ENCODE measurements at regions of chr2 and their contacts with region 1.

Region 1: GRCh38 chr2:43226558-43226954 is at the start of gene ZFP36L2:
- DNase-seq: peak; percentile 94 to 95
- ATAC-seq: peak; percentile 59 to 61
- H3K4me3 ChIP-seq: peak within 1 kb of the TSS; percentile 76 to 99 (median 96)
- H3K27ac ChIP-seq: peak within 1 kb of the TSS; percentile 99 to 100 (median 100)
- H3K4me1 ChIP-seq: peaks cover 34 to 41% of the 10 kb centered on the region in 2 donors
- H3K27me3 ChIP-seq: no peaks in the 10 kb centered on the region
- CTCF ChIP-seq: no peak
- POLR2A ChIP-seq: peak; percentile 97 to 100
- total RNA-seq, gene ZFP36L2: 15.5 to 58.6 (median 44.8) TPM

Region 2: DNA sequence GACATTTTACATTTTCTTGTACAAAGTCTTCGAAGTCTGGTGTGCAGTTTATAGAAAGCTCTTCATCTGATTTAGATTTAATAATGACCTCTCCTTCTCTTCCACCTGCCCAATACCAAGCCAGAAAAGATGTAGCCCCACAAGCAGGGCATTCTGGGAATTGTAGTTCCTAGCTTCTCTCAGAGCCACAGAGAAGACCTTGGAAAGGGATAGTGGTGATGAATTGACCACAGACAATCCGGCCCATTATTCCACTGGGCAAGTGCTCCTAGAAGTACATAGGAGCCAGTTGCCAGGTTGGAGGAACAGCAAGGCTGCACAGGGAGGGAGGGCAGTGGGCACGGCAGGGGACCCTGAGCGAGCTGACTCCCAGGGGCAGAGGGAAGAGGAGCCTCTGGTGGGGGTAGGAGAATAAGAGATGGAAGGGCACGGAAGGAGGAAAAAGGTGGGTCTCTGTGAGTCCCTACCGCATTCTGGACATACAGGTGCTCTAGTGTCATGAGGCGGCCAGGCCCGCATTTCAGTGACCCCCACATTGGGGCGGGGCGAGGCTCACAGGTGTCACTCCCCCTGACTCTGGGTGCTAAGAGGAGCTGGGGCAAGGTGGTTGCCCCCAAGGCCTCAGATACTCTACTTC is 281.7 kb before region 1 on chr2:
- in situ Hi-C with region 1: loop called in 2 of 4 experiments (anchors 10 kb)
- intact Hi-C with region 1: loop called (anchors 1 kb)
- DNase-seq: no peak
- ATAC-seq: no peak
- H3K4me3 ChIP-seq: no peak overlapping the region
- H3K27ac ChIP-seq: no peak overlapping the region
- H3K4me1 ChIP-seq: peaks cover 5 to 10% of the 10 kb centered on the region in 2 donors
- H3K27me3 ChIP-seq: no peaks in the 10 kb centered on the region
- CTCF ChIP-seq: no peak
- POLR2A ChIP-seq: no peak

Region 3: DNA sequence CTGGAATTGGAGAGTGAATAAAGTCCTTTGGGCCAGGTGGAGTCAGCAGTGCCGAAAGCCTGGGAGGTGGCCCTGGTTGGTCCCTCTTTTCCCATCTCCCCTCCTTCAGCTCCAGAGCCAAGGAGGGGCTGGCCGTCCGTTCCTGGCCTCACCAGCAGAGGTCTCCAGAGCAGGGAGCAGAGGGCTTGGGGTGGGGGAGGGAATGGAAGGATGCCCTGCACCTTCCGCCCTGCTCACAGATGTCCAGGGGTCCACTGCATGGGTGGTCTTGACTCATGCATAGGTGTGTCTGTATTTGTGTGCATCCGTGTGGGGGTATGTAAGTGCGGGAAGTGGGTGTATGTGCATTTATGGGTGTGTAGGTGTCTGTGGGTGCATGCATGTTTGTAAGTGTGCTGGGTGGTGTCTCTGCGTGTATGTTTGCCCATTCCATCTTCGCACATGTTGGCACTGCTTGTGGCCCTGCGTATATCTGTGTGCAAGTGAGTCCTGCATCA is 202.0 kb before region 1 on chr2:
- in situ Hi-C with region 1: loop called in 3 of 4 experiments (anchors 5 to 10 kb)
- intact Hi-C with region 1: loop called (anchors 2 kb)
- DNase-seq: peak; percentile 27 to 57
- ATAC-seq: peak; percentile 43 to 54
- H3K4me3 ChIP-seq: no peak overlapping the region
- H3K27ac ChIP-seq: no peak overlapping the region
- H3K4me1 ChIP-seq: peaks cover 3 to 7% of the 10 kb centered on the region in 2 donors
- H3K27me3 ChIP-seq: no peaks in the 10 kb centered on the region
- CTCF ChIP-seq: peak; percentile 57 to 90 (median 84)
- POLR2A ChIP-seq: no peak

Region 4: DNA sequence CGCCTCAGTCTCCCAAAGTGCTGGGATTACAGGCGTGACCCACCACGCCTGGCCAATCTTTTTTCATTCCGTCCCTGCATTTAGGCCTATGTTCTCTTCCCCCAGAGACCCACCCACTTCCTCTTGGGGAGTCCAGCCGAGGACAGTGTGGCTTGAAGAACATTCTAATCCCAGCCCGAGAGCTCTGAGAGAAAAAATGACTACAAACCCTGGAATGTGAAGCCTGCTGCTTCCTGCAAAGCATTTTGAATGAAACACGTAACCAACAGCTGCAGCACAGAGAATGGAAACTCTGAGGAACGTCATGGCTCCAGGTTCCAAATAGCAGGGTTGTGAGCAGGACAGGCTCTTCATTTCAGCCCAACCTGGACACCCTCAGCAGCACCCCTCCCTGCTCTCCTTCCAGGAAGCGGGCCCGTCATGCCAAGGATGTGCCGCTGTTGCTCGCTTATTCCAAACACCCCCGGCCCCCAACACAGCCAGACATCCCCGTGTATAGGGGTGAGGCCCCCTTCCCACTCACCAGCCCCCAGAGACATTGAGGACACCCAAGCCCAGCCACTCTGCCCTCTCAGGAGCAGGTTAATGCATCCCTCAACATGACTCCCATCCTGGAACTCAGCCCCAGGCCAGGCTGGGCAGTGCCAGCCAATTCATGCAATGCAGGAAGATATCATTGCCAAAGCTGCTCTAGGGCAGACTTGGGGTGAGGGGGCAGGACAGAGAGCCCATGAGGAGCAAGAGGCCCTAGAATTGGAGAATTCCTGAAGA is 139.9 kb before region 1 on chr2:
- in situ Hi-C with region 1: no loop called
- intact Hi-C with region 1: loop called (anchors 2 kb)
- DNase-seq: peak; percentile 74 to 79
- ATAC-seq: peak; percentile 76 to 86
- H3K4me3 ChIP-seq: no peak overlapping the region
- H3K27ac ChIP-seq: peak overlapping the region; percentile 78 to 90 (median 86)
- H3K4me1 ChIP-seq: peaks cover 53 to 59% of the 10 kb centered on the region in 2 donors
- H3K27me3 ChIP-seq: no peaks in the 10 kb centered on the region
- CTCF ChIP-seq: no peak
- POLR2A ChIP-seq: peak in 1 of 2 donors; percentile 42

Region 5: GRCh38 chr2:43158259-43158880 is 68.2 kb before region 1 on chr2:
- in situ Hi-C with region 1: no loop called
- intact Hi-C with region 1: loop called (anchors 2 kb)
- DNase-seq: peak; percentile 40 to 79
- ATAC-seq: peak; percentile 38 to 73
- H3K4me3 ChIP-seq: peak overlapping the region in 2 of 4 donors; percentile 32 to 36
- H3K27ac ChIP-seq: peak overlapping the region; percentile 82 to 93 (median 90)
- H3K4me1 ChIP-seq: peaks cover 28 to 34% of the 10 kb centered on the region in 2 donors
- H3K27me3 ChIP-seq: no peaks in the 10 kb centered on the region
- CTCF ChIP-seq: no peak
- POLR2A ChIP-seq: no peak

Region 6: GRCh38 chr2:43542285-43542937 is 315.9 kb after region 1 on chr2:
- in situ Hi-C with region 1: no loop called
- intact Hi-C with region 1: loop called (anchors 2 kb)
- DNase-seq: no peak
- ATAC-seq: no peak
- H3K4me3 ChIP-seq: no peak overlapping the region
- H3K27ac ChIP-seq: no peak overlapping the region
- H3K4me1 ChIP-seq: peaks cover 6 to 11% of the 10 kb centered on the region in 2 donors
- H3K27me3 ChIP-seq: no peaks in the 10 kb centered on the region
- CTCF ChIP-seq: peak; percentile 52 to 63 (median 61)
- POLR2A ChIP-seq: no peak

Measured in gastrocnemius medialis (tissue), 4 donors.